ENCODE measurements at regions of chr2 and their contacts with region 1.

Region 1: GRCh38 chr2:164430166-164430783 is 191.0 kb downstream of the GRB14 start:
- DNase-seq: peak; percentile 39 to 41
- H3K4me3 ChIP-seq: no peak overlapping the region
- H3K4me3 Mint-ChIP-seq: no peak overlapping the region
- H3K27ac Mint-ChIP-seq: no peak overlapping the region
- H3K4me1 ChIP-seq: no peaks in the 10 kb centered on the region
- H3K4me1 Mint-ChIP-seq: no peaks in the 10 kb centered on the region
- H3K27me3 ChIP-seq: no peaks in the 10 kb centered on the region
- H3K27me3 Mint-ChIP-seq: peaks cover 6% of the 10 kb centered on the region
- CTCF ChIP-seq: peak; percentile 57 to 72

Region 2: DNA sequence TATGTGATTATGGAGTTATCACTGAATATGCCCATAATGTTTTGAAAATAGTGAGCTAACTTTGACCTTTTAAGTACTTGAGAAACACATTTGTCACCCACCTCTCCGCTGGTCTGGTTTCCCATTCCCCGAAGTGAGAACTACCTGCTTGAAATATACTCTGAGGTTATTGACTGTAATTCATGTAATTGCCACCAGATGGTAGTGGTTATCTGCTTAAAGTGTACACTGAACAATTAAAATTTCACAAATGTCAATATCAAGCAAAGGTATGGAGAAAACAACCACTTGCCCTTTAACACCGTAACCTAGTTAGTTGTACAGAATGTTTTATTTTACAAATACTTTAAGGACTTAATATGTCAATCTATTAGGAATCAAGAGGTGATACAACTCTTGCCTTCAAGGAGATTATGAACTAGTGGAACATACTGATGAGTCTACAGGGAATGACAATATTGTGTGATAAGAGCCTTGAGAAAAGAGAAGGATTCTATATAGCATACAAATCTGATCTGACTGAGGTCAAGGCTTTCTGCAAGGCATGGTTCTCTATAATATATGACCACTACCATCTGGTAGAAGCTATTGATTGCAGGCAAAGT is 1274.9 kb before region 1 on chr2:
- CTCF ChIA-PET with region 1: no interaction called
- POLR2A ChIA-PET with region 1: no interaction called
- intact Hi-C with region 1: loop called (anchors 5 kb)
- DNase-seq: peak in 1 of 2 experiments; percentile 46
- H3K4me3 ChIP-seq: no peak overlapping the region
- H3K4me3 Mint-ChIP-seq: no peak overlapping the region
- H3K27ac Mint-ChIP-seq: no peak overlapping the region
- H3K4me1 ChIP-seq: no peaks in the 10 kb centered on the region
- H3K4me1 Mint-ChIP-seq: peaks cover 5% of the 10 kb centered on the region
- H3K27me3 ChIP-seq: no peaks in the 10 kb centered on the region
- H3K27me3 Mint-ChIP-seq: peaks cover 6% of the 10 kb centered on the region
- CTCF ChIP-seq: peak; percentile 48 to 84

Region 3: DNA sequence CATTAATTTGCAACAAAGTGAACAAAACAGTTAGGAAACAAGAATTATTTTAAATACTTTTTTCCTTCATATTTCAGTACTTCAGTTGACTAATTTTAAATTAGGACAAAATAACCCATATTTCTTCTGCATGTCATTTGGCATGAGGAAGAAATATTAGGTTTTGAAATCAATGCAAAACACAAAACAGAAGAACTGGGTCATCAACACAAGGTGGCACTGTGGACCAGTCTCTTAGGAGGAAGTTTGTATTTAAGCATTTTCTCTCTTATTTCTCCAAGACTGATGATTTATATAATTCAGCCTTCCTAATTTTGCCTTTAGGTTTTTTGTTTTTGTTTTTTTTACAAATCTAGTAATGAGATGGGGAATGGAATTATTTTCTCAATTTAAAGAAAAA is 1238.9 kb before region 1 on chr2:
- CTCF ChIA-PET with region 1: no interaction called
- POLR2A ChIA-PET with region 1: no interaction called
- intact Hi-C with region 1: loop called (anchors 2 kb)
- DNase-seq: peak in 1 of 2 experiments; percentile 20
- H3K4me3 ChIP-seq: no peak overlapping the region
- H3K4me3 Mint-ChIP-seq: no peak overlapping the region
- H3K27ac Mint-ChIP-seq: no peak overlapping the region
- H3K4me1 ChIP-seq: no peaks in the 10 kb centered on the region
- H3K4me1 Mint-ChIP-seq: no peaks in the 10 kb centered on the region
- H3K27me3 ChIP-seq: no peaks in the 10 kb centered on the region
- H3K27me3 Mint-ChIP-seq: peaks cover 2% of the 10 kb centered on the region
- CTCF ChIP-seq: peak; percentile 51 to 61

Region 4: GRCh38 chr2:163465440-163465839 is 964.8 kb before region 1 on chr2:
- CTCF ChIA-PET with region 1: no interaction called
- POLR2A ChIA-PET with region 1: no interaction called
- intact Hi-C with region 1: loop called (anchors 10 kb)
- DNase-seq: no peak
- H3K4me3 ChIP-seq: no peak overlapping the region
- H3K4me3 Mint-ChIP-seq: no peak overlapping the region
- H3K27ac Mint-ChIP-seq: no peak overlapping the region
- H3K4me1 ChIP-seq: no peaks in the 10 kb centered on the region
- H3K4me1 Mint-ChIP-seq: no peaks in the 10 kb centered on the region
- H3K27me3 ChIP-seq: no peaks in the 10 kb centered on the region
- H3K27me3 Mint-ChIP-seq: peaks cover 3% of the 10 kb centered on the region
- CTCF ChIP-seq: no peak

Region 5: GRCh38 chr2:164164602-164165001 is 265.7 kb before region 1 on chr2:
- CTCF ChIA-PET with region 1: no interaction called
- POLR2A ChIA-PET with region 1: no interaction called
- intact Hi-C with region 1: no loop called
- DNase-seq: no peak
- H3K4me3 ChIP-seq: no peak overlapping the region
- H3K4me3 Mint-ChIP-seq: no peak overlapping the region
- H3K27ac Mint-ChIP-seq: no peak overlapping the region
- H3K4me1 ChIP-seq: no peaks in the 10 kb centered on the region
- H3K4me1 Mint-ChIP-seq: no peaks in the 10 kb centered on the region
- H3K27me3 ChIP-seq: no peaks in the 10 kb centered on the region
- H3K27me3 Mint-ChIP-seq: peaks cover 9% of the 10 kb centered on the region
- CTCF ChIP-seq: no peak

Region 6: DNA sequence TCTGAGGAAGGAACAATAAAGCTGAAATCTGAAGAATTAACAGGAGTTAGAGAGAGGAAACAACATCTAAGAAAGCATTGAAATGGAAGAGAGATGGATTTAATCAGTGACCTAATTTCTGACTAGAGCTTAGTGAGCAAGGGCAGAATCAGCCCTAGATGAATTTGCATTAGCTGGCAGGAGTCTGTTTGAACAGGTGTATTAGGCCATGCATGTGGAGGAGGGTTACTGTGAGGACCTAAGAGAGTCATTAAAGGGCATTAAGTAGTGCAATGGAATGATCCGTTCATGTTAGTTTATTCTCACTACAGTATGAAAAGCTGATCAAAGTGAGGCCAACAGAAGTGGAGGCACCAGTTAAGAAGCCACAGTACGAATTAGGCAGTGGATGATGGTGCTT is 94.3 kb before region 1 on chr2:
- CTCF ChIA-PET with region 1: no interaction called
- POLR2A ChIA-PET with region 1: no interaction called
- intact Hi-C with region 1: loop called (anchors 5 kb)
- DNase-seq: no peak
- H3K4me3 ChIP-seq: no peak overlapping the region
- H3K4me3 Mint-ChIP-seq: no peak overlapping the region
- H3K27ac Mint-ChIP-seq: no peak overlapping the region
- H3K4me1 ChIP-seq: no peaks in the 10 kb centered on the region
- H3K4me1 Mint-ChIP-seq: no peaks in the 10 kb centered on the region
- H3K27me3 ChIP-seq: no peaks in the 10 kb centered on the region
- H3K27me3 Mint-ChIP-seq: peaks cover 9% of the 10 kb centered on the region
- CTCF ChIP-seq: no peak

Region 7: DNA sequence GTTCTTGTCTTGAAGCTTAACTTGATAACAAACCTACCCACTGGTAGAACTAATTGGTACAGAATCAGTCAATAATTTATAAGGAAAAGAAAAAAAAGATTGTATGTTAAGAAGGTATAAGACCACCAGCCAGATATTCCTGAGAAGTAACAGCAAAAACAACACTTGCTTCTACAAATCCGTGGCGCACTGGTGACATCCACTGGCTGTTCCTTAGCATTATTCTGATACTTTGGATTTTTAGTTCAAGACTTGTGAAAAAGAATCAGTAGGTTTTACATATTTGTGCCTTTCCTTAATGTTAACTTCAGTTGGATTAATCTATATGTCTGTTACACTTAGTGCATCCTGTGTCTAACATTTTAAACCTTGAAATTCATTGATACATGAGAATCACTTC is 49.2 kb after region 1 on chr2:
- CTCF ChIA-PET with region 1: no interaction called
- POLR2A ChIA-PET with region 1: no interaction called
- intact Hi-C with region 1: loop called (anchors 5 kb)
- DNase-seq: peak; percentile 33 to 43
- H3K4me3 ChIP-seq: no peak overlapping the region
- H3K4me3 Mint-ChIP-seq: no peak overlapping the region
- H3K27ac Mint-ChIP-seq: no peak overlapping the region
- H3K4me1 ChIP-seq: peaks cover 4% of the 10 kb centered on the region; the same call in 1 of the 2 replicates
- H3K4me1 Mint-ChIP-seq: no peaks in the 10 kb centered on the region
- H3K27me3 ChIP-seq: no peaks in the 10 kb centered on the region
- H3K27me3 Mint-ChIP-seq: no peaks in the 10 kb centered on the region
- CTCF ChIP-seq: peak; percentile 47 to 49

Region 8: DNA sequence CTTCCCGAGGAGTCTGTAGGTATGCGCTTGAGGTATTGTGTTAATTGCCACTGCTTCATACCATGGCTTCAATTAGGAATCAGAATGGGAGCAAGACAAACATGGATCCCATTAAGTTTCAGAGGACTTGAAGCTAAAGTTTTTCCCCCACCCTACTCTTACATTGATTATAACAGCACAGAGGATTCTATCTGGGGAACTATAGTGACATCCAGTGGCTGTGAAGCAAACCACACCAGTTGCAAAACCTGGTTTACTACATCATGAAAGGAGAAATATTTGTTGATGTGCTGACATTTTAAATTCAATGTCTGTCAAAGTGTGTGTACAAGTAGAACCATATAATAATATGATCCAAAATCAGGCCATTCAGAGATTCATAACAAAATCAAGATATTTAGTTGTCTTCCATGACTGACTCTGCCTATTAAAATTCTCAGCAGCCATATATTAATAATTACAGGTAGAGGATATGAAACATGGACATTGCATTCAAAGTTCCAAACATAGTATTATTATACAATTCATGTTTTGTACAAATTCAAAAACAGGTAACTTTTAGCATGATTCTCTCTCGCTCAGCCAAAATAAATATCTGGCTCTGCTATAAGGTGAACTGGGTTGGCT is 108.1 kb after region 1 on chr2:
- CTCF ChIA-PET with region 1: interaction called, 9 read pairs
- POLR2A ChIA-PET with region 1: no interaction called
- intact Hi-C with region 1: loop called (anchors 1 kb)
- DNase-seq: peak in 1 of 2 experiments; percentile 42
- H3K4me3 ChIP-seq: no peak overlapping the region
- H3K4me3 Mint-ChIP-seq: no peak overlapping the region
- H3K27ac Mint-ChIP-seq: no peak overlapping the region
- H3K4me1 ChIP-seq: no peaks in the 10 kb centered on the region
- H3K4me1 Mint-ChIP-seq: no peaks in the 10 kb centered on the region
- H3K27me3 ChIP-seq: no peaks in the 10 kb centered on the region
- H3K27me3 Mint-ChIP-seq: no peaks in the 10 kb centered on the region
- CTCF ChIP-seq: peak; percentile 70 to 84

Measured in Caco-2 (cell line).